ENCODE measurements at regions of chr4 and their contacts with region 1.

Region 1: DNA sequence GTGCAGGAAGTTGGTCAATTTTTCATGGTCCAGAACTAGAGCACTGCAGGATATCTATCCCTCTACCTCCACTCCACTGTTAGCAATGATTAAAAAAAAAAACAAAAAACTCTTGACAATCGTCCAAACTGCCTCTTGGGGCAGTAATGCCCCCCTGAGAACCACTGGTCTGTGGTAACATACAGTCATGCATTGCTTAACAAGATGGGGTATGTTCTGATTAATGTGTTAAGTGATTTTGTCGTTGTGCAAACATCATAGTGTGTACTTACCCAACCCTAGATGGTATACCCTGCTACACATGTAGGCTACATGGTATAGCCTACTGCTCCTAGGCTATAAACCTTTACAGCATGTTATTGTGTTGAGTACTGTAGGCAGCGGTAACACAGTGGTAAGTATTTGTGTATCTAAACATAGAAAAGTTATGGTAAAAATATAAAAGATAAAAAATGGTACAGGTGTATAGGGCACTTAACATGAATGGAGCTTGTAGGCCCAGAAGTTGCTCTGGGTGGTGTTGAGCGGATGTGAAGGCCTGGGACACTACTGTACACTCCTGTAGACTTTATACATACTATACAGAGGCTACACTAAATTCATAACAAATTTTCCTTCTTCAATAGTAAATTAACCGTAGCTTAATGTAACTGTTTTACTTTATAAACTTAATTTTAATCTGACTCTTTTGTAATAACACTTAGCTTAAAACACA is 34.1 kb downstream of the ART3 start:
- DNase-seq: no peak
- ATAC-seq: no peak

Region 2: GRCh38 chr4:76147454-76148141 is 39.0 kb after region 1 on chr4:
- intact Hi-C with region 1: loop called (anchors 2 kb)
- DNase-seq: peak; percentile 65
- ATAC-seq: peak; percentile 74

Region 3: DNA sequence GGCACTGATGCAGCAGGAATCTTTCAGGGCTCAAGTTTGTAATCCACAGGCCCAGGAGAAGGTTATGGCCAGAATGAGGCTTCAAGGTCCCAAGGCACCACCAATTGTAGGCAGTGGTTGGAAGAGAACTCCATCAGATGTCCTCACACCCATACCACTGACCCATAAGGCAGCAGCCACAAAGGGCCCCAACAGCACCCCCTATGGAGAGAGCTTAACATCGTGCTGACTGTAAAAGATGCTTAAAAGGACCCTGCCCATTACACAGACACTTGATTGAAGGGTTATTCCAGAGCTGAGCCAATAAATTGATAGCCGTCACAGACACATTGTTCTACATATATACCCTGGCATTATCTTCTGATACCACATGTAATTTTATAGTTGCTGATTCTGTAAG is 675.6 kb after region 1 on chr4:
- intact Hi-C with region 1: no loop called
- DNase-seq: no peak
- ATAC-seq: no peak